ENCODE measurements at regions of chr19 and their contacts with region 1.

Region 1: DNA sequence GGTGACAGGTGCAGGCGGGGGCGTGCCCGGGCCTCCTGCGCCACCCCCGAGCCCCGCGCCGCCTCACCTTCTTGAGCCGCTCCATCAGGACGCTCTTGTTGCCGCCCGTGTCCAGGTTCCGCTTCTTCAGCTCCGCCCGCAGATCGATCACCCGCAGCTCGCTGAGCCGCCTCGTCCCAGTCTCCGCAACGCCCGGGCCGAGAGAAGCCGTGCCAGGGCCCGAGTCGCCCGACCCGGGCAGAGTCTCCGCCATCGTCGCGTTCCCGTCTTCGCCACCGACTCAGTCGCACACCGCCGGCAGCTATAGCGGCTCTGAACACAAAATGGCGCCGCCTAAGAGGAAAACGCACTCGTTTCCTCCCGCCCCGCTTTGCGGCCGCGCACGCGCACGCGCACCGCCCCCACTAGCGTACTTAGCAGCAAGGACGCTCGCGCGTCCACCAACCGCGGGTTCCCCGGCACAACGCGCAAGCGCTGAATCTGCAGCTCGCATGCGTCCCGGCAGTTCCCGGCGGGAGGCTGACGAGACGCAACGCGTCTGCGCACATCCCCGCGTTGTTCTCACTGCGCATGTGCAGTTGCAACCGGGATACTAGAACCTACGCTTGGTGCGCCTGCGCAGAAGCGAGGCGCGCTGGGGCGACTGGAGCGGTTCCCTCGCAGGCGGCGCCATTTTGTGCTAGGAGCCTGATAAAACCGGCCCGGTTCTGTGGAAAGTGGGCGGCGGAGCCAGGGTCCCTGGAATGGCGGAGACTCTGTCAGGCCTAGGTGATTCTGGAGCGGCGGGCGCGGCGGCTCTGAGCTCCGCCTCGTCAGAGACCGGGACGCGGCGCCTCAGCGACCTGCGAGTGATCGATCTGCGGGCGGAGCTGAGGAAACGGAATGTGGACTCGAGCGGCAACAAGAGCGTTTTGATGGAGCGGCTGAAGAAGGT is at the starts of genes SAFB and SAFB2:
- DNase-seq: peak; percentile 99 to 100 (median 100)
- H3K4me3 ChIP-seq: peak within 1 kb of the TSS; percentile 93 to 98 (median 96)
- H3K4me3 Mint-ChIP-seq: peak within 1 kb of the TSS; percentile 99
- H3K27ac ChIP-seq: peak within 1 kb of the TSS; percentile 88 to 92
- H3K27ac Mint-ChIP-seq: peak within 1 kb of the TSS; percentile 98 to 99 (median 99)
- H3K4me1 ChIP-seq: peaks cover 50 to 66% of the 10 kb centered on the region in 2 donors
- H3K4me1 Mint-ChIP-seq: peaks cover 58% of the 10 kb centered on the region
- H3K27me3 ChIP-seq: no peaks in the 10 kb centered on the region
- H3K27me3 Mint-ChIP-seq: no peaks in the 10 kb centered on the region
- CTCF ChIP-seq: no peak
- polyA plus RNA-seq, gene SAFB: 12.2 to 76.6 (median 23.1) TPM
- polyA plus RNA-seq, gene SAFB2: 7.5 to 53.4 (median 14.7) TPM

Region 2: DNA sequence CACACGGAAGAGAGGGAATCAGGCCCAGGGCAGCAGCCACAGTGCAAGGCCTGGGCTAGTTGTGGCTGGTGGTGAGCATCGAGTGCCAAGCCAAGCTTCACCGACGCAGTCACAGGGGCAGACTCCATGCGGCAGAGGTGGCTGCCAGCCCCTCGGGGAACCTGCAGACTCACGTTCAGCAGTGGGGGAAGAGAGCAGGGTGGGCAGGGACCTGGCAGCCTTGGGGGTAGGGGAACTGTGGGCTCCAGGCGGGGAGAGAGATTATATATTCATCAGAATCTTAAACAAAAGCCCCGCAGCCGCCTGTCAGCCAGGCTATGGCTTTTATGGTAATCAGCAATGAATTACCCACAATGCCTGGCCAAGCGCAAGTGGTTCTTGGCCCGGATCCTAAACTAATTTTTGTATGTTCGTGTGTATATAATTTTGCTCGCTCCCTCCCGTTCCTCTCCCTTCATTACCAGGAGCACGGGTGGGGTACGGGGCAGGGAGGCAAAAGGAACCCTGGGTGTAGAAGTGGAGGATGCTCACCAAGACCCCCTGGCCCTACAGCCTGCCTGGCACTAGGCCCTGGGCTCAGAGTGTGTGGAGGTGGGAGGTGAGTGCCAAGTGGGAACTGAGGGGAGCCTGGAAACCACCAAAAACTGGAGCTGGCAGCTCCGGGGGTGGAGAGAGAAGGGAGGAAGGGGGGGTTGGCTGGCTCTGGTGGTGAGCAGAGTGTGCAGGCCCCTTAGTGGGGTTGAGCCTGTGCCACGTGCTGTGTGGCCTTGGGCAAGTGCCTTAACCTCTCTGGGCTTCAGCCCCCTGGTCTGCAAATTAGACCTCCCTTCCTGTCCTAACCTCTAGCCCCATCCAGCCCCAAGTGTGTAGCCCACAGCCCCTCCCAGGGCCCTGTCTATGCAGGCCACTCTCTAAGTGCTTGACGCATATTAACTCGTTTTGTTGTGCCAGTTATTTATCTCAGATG is 314.0 kb before region 1 on chr19:
- intact Hi-C with region 1: no loop called
- DNase-seq: no peak
- H3K4me3 ChIP-seq: no peak overlapping the region
- H3K4me3 Mint-ChIP-seq: no peak overlapping the region
- H3K27ac ChIP-seq: no peak overlapping the region
- H3K27ac Mint-ChIP-seq: no peak overlapping the region
- H3K4me1 ChIP-seq: no peaks in the 10 kb centered on the region
- H3K4me1 Mint-ChIP-seq: no peaks in the 10 kb centered on the region
- H3K27me3 ChIP-seq: peaks cover 0 to 6% of the 10 kb centered on the region in 2 donors
- H3K27me3 Mint-ChIP-seq: peaks cover 6 to 25% (median 23%) of the 10 kb centered on the region in 3 donors
- CTCF ChIP-seq: no peak

Region 3: GRCh38 chr19:5452594-5453565 is 169.8 kb before region 1 on chr19:
- intact Hi-C with region 1: no loop called
- DNase-seq: no peak
- H3K4me3 ChIP-seq: no peak overlapping the region
- H3K4me3 Mint-ChIP-seq: no peak overlapping the region
- H3K27ac ChIP-seq: no peak overlapping the region
- H3K27ac Mint-ChIP-seq: no peak overlapping the region
- H3K4me1 ChIP-seq: no peaks in the 10 kb centered on the region
- H3K4me1 Mint-ChIP-seq: peaks cover 2% of the 10 kb centered on the region
- H3K27me3 ChIP-seq: no peaks in the 10 kb centered on the region
- H3K27me3 Mint-ChIP-seq: peaks cover 4 to 11% (median 4%) of the 10 kb centered on the region in 3 donors
- CTCF ChIP-seq: no peak

Region 4: GRCh38 chr19:5680437-5681368 is 58.0 kb after region 1 on chr19 and contains the starts of genes HSD11B1L and MICOS13:
- intact Hi-C with region 1: loop called in 1 of 2 experiments (anchors 2 kb)
- DNase-seq: peak; percentile 97 to 99 (median 99)
- H3K4me3 ChIP-seq: peak within 1 kb of the TSS; percentile 86 to 99 (median 95)
- H3K4me3 Mint-ChIP-seq: peak within 1 kb of the TSS; percentile 97 to 99
- H3K27ac ChIP-seq: peak within 1 kb of the TSS; percentile 78 to 93
- H3K27ac Mint-ChIP-seq: peak within 1 kb of the TSS; percentile 94 to 99 (median 98)
- H3K4me1 ChIP-seq: peaks cover 14 to 20% of the 10 kb centered on the region in 2 donors
- H3K4me1 Mint-ChIP-seq: peaks cover 21% of the 10 kb centered on the region
- H3K27me3 ChIP-seq: no peaks in the 10 kb centered on the region
- H3K27me3 Mint-ChIP-seq: peaks cover 0 to 5% (median 5%) of the 10 kb centered on the region in 3 donors
- CTCF ChIP-seq: no peak
- polyA plus RNA-seq, gene HSD11B1L: 1.9 to 2.5 (median 2.4) TPM
- polyA plus RNA-seq, gene MICOS13: 22.5 to 82.7 (median 78.6) TPM

Region 5: DNA sequence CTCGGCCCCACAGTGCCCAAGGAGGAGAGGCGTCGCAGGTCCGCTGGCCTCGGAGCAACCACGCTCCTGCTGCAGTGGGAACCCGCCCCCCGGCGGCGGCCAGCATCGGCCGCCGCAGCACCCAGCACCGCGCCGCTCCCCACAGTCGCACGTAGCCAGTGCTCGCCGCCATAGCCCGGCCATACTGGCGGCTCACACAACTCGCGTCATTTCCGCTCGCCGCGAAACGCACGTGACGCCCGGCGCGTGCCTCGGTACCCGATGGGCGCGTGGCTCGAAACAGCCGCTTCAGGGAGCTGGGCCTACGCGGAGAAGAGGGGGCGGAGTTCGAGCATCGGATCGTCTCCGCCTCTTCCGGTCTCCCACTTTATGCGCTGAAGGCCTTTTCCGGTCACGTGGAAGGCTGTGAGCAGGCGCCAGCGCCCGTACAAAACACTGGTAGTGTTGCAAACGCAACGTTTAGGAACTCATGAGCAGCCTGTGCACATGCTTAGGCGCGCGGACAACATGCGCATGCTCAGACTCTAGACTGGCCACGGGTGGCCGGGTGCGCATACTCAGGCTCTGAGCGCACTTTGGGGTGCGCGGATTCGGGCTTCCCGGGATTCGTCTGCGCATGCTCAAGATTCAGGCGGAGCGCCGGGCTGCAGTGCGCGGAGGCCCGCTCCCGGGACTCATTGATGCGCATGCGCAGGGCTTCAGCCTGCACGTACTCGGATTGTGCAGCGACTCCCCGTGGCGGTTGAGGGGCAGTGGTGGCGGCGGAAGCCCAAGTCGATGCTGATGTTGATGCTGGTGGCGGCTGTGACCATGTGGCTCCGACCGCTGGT is 97.4 kb after region 1 on chr19 and contains the starts of genes CATSPERD and LONP1:
- intact Hi-C with region 1: loop called in 1 of 2 experiments (anchors 2 kb)
- DNase-seq: peak; percentile 99 to 100 (median 100)
- H3K4me3 ChIP-seq: peak within 1 kb of the TSS; percentile 59 to 82 (median 66)
- H3K4me3 Mint-ChIP-seq: peak within 1 kb of the TSS; percentile 81 to 90
- H3K27ac ChIP-seq: peak within 1 kb of the TSS; percentile 89 to 91
- H3K27ac Mint-ChIP-seq: peak within 1 kb of the TSS; percentile 90 to 95 (median 94)
- H3K4me1 ChIP-seq: peaks cover 20 to 29% of the 10 kb centered on the region in 2 donors
- H3K4me1 Mint-ChIP-seq: peaks cover 26% of the 10 kb centered on the region
- H3K27me3 ChIP-seq: no peaks in the 10 kb centered on the region
- H3K27me3 Mint-ChIP-seq: peaks cover 0 to 8% (median 2%) of the 10 kb centered on the region in 3 donors
- CTCF ChIP-seq: peak; percentile 87
- polyA plus RNA-seq, gene CATSPERD: not detected
- polyA plus RNA-seq, gene LONP1: 12.1 to 37.2 (median 13.8) TPM

Region 6: GRCh38 chr19:5790573-5791520 is 168.1 kb after region 1 on chr19 and contains the start of gene DUS3L:
- intact Hi-C with region 1: loop called in 1 of 2 experiments (anchors 2 kb)
- DNase-seq: peak; percentile 96 to 97 (median 96)
- H3K4me3 ChIP-seq: peak within 1 kb of the TSS; percentile 47 to 86 (median 67)
- H3K4me3 Mint-ChIP-seq: peak within 1 kb of the TSS; percentile 100
- H3K27ac ChIP-seq: peak within 1 kb of the TSS; percentile 91 to 97
- H3K27ac Mint-ChIP-seq: peak within 1 kb of the TSS; percentile 100
- H3K4me1 ChIP-seq: peaks cover 6 to 21% of the 10 kb centered on the region in 2 donors
- H3K4me1 Mint-ChIP-seq: peaks cover 10% of the 10 kb centered on the region
- H3K27me3 ChIP-seq: no peaks in the 10 kb centered on the region
- H3K27me3 Mint-ChIP-seq: peaks cover 1 to 3% (median 3%) of the 10 kb centered on the region in 3 donors
- CTCF ChIP-seq: no peak
- polyA plus RNA-seq, gene DUS3L: 17.4 to 40.2 (median 23.4) TPM